HepG2 (cell line): ENCODE measurements at regions of chr9 and their contacts with region 1.

Region 1: DNA sequence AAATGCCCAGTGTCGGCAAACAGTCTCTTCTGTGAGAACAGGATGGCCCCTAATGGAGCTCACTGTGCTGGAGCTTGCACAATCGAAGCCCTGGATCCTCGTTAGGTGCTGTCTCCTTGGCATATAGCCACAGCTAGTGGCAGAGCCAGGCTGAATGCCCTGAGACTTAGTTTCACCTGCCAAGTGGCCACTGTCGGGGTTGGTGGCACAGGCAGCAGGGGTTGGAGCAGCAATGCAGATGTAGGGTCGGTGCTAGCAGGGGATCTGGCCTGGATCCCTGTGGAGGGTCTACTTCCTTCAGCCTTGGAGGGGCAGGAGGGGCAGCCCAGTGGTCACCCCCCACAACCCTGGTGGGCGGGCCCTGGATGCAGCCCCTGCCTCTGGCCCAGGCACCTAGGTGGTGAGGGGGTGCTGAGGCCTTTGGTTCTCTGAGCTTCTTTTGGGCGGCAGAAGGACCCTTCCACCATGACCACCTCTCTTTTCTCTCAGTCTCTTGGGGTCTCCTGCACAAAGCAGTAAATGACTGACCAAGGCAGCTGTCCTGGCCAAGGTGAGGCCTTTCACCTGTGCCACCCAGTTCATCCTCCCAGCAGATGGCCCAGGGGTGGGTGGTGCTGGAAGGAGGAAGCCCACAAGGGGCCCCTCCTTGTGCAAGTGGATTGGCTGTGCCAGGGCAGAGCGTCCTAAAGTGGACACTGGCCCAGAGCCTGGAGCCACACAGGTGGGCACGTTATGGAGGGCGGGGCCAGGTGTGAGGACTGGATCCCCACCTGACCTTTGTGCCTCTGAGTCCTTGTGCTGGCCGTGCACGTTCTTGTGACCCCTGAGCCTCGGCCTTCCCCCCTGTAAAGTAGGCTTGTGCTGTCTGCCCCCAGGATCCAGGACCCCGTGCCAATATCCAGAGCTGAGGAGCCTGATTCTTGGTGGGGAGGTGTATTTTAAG is 44.8 kb downstream of the PHF2 start:
- DNase-seq: no peak
- ATAC-seq: no peak
- H3K4me3 ChIP-seq: no peak overlapping the region
- H3K27ac ChIP-seq: no peak overlapping the region
- H3K4me1 ChIP-seq: peaks cover 12% of the 10 kb centered on the region; the same call in 1 of the 2 replicates
- H3K27me3 ChIP-seq: no peaks in the 10 kb centered on the region
- CTCF ChIP-seq: no peak
- EP300 ChIP-seq: no peak
- POLR2A ChIP-seq: no peak
- RAD21 ChIP-seq: no peak

Region 2: DNA sequence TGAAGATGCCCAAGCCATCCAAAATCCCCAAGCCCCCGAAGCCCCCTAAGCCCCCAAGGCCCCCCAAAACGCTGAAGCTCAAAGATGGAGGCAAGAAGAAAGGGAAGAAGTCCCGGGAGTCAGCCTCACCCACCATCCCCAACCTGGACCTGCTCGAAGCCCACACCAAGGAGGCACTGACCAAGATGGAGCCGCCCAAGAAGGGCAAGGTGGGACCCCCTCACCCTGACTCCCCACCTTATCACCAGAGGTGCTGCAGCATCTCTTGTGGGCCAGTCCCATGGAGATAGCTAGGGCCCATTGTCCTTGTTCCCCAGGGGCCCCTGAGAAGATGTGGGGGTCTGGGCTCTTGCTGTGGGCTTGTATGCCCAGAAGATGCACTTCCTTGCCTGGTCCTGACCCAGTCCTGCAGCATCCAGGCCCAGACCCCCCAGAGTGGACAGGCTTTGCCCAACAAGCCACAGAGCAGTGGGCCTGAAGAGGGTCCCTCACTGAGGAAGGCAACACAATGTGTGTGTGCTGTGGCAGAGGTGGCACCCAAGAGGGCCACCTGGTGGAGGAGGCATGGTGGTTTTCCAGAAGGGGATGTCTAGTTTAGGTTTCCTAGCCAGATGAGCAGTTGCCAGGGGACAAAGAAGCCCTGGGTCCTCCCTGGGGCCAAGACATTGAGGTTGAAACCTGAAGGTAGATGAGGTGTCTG is 39.4 kb after region 1 on chr9:
- CTCF ChIA-PET with region 1: no interaction called
- POLR2A ChIA-PET with region 1: no interaction called
- in situ Hi-C with region 1: no loop called
- intact Hi-C with region 1: loop called (anchors 2 kb)
- DNase-seq: no peak
- ATAC-seq: no peak
- H3K4me3 ChIP-seq: no peak overlapping the region
- H3K27ac ChIP-seq: no peak overlapping the region
- H3K4me1 ChIP-seq: no peaks in the 10 kb centered on the region
- H3K27me3 ChIP-seq: no peaks in the 10 kb centered on the region
- CTCF ChIP-seq: 0 out of 2 replicates have a peak, but pooled peaks have one; percentile 10
- EP300 ChIP-seq: no peak
- POLR2A ChIP-seq: no peak
- RAD21 ChIP-seq: no peak